ENCODE measurements at regions of chr1 and their contacts with region 1.

Region 1: GRCh38 chr1:9004700-9005394 is 21.4 kb downstream of the SLC2A7 start:
- DNase-seq: peak; percentile 67 to 90 (median 82)
- ATAC-seq: peak; percentile 96
- H3K4me3 ChIP-seq: peak overlapping the region; percentile 7 to 48
- H3K4me3 Mint-ChIP-seq: peak overlapping the region; percentile 75
- H3K27ac ChIP-seq: no peak overlapping the region
- H3K27ac Mint-ChIP-seq: peak overlapping the region; percentile 66
- H3K4me1 ChIP-seq: peaks cover 16% of the 10 kb centered on the region
- H3K4me1 Mint-ChIP-seq: peaks cover 12% of the 10 kb centered on the region
- H3K27me3 ChIP-seq: no peaks in the 10 kb centered on the region
- H3K27me3 Mint-ChIP-seq: no peaks in the 10 kb centered on the region
- CTCF ChIP-seq: peak; percentile 97

Region 2: GRCh38 chr1:8477166-8477982 is 527.5 kb before region 1 on chr1:
- CTCF ChIA-PET with region 1: no interaction called
- POLR2A ChIA-PET with region 1: no interaction called
- intact Hi-C with region 1: no loop called
- DNase-seq: no peak
- ATAC-seq: no peak
- H3K4me3 ChIP-seq: no peak overlapping the region
- H3K4me3 Mint-ChIP-seq: no peak overlapping the region
- H3K27ac ChIP-seq: no peak overlapping the region
- H3K27ac Mint-ChIP-seq: no peak overlapping the region
- H3K4me1 ChIP-seq: peaks cover 11% of the 10 kb centered on the region
- H3K4me1 Mint-ChIP-seq: peaks cover 27% of the 10 kb centered on the region
- H3K27me3 ChIP-seq: no peaks in the 10 kb centered on the region
- H3K27me3 Mint-ChIP-seq: no peaks in the 10 kb centered on the region
- CTCF ChIP-seq: no peak

Region 3: GRCh38 chr1:8560611-8561544 is 444.0 kb before region 1 on chr1:
- CTCF ChIA-PET with region 1: interaction called, 7 read pairs
- POLR2A ChIA-PET with region 1: no interaction called
- intact Hi-C with region 1: loop called in 1 of 2 experiments (anchors 10 kb)
- DNase-seq: peak in 5 of 9 experiments; percentile 28 to 70 (median 31)
- ATAC-seq: peak; percentile 94
- H3K4me3 ChIP-seq: no peak overlapping the region
- H3K4me3 Mint-ChIP-seq: no peak overlapping the region
- H3K27ac ChIP-seq: no peak overlapping the region
- H3K27ac Mint-ChIP-seq: no peak overlapping the region
- H3K4me1 ChIP-seq: no peaks in the 10 kb centered on the region
- H3K4me1 Mint-ChIP-seq: peaks cover 5% of the 10 kb centered on the region
- H3K27me3 ChIP-seq: no peaks in the 10 kb centered on the region
- H3K27me3 Mint-ChIP-seq: no peaks in the 10 kb centered on the region
- CTCF ChIP-seq: peak; percentile 99

Region 4: GRCh38 chr1:8858888-8859706 is 145.8 kb before region 1 on chr1:
- CTCF ChIA-PET with region 1: interaction called, 194 read pairs
- POLR2A ChIA-PET with region 1: interaction called, 5 read pairs
- intact Hi-C with region 1: loop called (anchors 1 kb)
- DNase-seq: peak in 7 of 9 experiments; percentile 37 to 76 (median 59)
- ATAC-seq: peak; percentile 79
- H3K4me3 ChIP-seq: no peak overlapping the region
- H3K4me3 Mint-ChIP-seq: no peak overlapping the region
- H3K27ac ChIP-seq: peak overlapping the region in 1 of 2 experiments; percentile 31
- H3K27ac Mint-ChIP-seq: peak overlapping the region; percentile 77
- H3K4me1 ChIP-seq: no peaks in the 10 kb centered on the region
- H3K4me1 Mint-ChIP-seq: peaks cover 15% of the 10 kb centered on the region
- H3K27me3 ChIP-seq: no peaks in the 10 kb centered on the region
- H3K27me3 Mint-ChIP-seq: no peaks in the 10 kb centered on the region
- CTCF ChIP-seq: peak; percentile 65

Region 5: DNA sequence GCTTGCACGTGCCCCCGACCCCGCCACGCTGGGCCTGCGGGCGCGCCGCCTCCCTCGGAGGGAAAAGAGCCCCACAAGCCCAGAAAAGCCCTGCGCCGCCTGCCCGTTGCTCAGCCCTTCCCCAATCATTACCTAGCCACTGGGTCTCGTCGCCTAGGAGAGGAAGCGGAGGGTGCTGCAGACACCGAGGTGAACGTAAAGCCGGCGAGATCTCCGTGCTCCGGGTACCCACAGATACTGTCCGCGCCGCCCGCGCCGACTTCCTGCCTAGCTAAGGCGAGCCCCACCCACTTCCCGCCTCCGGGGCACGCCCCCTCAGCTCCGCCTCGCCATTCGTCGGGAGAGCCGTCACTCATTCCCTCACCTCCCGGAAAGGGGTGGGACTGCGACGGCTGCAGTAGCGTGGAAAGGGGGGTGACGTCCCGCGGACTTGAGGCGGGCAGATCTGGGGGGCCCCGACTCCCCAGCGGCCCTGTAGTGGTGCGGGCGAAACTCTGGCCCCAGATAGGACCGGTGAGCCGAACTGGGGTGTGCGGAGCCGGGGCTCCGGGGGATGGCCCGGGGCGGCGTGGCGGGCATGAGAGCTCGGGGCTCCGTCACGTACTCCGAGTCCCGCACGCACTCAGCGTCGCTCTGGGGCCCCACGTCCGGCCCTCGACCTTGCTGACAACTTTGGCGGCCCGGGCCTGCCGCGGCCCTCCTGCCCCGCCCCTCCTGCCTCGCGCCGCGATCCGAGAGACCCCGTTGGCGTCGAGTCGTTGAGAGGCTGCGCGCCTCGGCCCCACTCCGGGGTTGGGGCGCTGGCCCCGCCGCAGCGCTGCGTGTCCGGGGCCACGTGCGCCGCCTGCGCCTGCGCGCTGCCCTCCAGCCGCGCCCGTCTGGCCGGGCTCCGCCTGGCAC is 126.1 kb before region 1 on chr1 and contains the start of gene ENO1:
- CTCF ChIA-PET with region 1: interaction called, 36 read pairs
- POLR2A ChIA-PET with region 1: interaction called, 7 read pairs
- intact Hi-C with region 1: no loop called
- DNase-seq: peak; percentile 96 to 100 (median 99)
- ATAC-seq: peak; percentile 80
- H3K4me3 ChIP-seq: peak within 1 kb of the TSS; percentile 90 to 94
- H3K4me3 Mint-ChIP-seq: peak within 1 kb of the TSS; percentile 92
- H3K27ac ChIP-seq: peak within 1 kb of the TSS; percentile 80 to 99
- H3K27ac Mint-ChIP-seq: peak within 1 kb of the TSS; percentile 98
- H3K4me1 ChIP-seq: peaks cover 43% of the 10 kb centered on the region
- H3K4me1 Mint-ChIP-seq: peaks cover 47% of the 10 kb centered on the region
- H3K27me3 ChIP-seq: no peaks in the 10 kb centered on the region
- H3K27me3 Mint-ChIP-seq: no peaks in the 10 kb centered on the region
- CTCF ChIP-seq: no peak
- total RNA-seq, gene ENO1: 130 to 136 TPM

Region 6: DNA sequence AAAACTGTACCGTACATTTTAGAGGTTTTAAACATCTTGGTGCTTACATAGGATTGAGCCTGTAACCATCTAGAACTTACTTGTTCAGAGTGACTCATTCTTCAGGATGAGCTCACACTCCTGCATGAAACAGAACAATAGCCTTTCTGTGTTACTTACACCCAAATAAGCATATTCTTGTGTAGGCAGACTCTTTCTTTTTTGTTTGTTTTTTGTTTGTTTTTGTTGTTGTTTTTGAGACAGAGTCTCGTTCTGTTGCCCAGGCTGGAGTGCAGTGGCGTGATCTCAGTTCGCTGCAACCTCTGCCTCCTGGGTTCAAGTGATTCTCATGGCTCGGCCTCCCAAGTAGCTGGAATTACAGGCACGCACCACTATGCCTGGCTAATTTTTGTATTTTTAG is 62.9 kb before region 1 on chr1:
- CTCF ChIA-PET with region 1: interaction called, 11 read pairs
- POLR2A ChIA-PET with region 1: no interaction called
- intact Hi-C with region 1: no loop called
- DNase-seq: no peak
- ATAC-seq: no peak
- H3K4me3 ChIP-seq: no peak overlapping the region
- H3K4me3 Mint-ChIP-seq: no peak overlapping the region
- H3K27ac ChIP-seq: no peak overlapping the region
- H3K27ac Mint-ChIP-seq: peak overlapping the region; percentile 69
- H3K4me1 ChIP-seq: peaks cover 98% of the 10 kb centered on the region
- H3K4me1 Mint-ChIP-seq: peaks cover 85% of the 10 kb centered on the region
- H3K27me3 ChIP-seq: no peaks in the 10 kb centered on the region
- H3K27me3 Mint-ChIP-seq: no peaks in the 10 kb centered on the region
- CTCF ChIP-seq: no peak

Region 7: DNA sequence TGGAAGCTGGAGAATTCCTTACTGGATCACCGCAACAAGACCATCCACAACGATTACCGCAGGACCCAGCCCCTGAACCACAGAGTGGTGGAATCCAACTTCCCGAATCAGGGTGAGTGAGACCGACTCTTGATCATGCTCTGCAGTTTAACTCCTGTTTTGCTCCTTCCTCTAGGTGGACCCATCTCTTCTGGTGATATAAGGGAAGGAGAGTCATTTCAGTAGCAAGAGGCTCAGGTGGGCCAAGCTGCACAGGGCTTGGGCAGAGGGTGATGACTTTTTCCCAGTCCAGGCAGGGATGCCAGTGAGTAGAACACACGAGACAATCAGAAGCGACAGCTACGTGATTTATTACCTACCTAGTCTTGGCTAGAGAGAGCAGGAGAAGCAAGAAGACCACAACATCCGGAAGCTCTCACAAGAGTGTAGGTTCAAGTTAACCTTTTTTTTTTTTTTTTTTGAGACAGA is 33.9 kb before region 1 on chr1:
- CTCF ChIA-PET with region 1: interaction called, 15 read pairs
- POLR2A ChIA-PET with region 1: interaction called, 5 read pairs
- intact Hi-C with region 1: loop called in 1 of 2 experiments (anchors 2 kb)
- DNase-seq: peak in 7 of 9 experiments; percentile 17 to 82 (median 62)
- ATAC-seq: peak; percentile 79
- H3K4me3 ChIP-seq: peak overlapping the region; percentile 62 to 77
- H3K4me3 Mint-ChIP-seq: peak overlapping the region; percentile 100
- H3K27ac ChIP-seq: peak overlapping the region; percentile 45 to 81
- H3K27ac Mint-ChIP-seq: peak overlapping the region; percentile 100
- H3K4me1 ChIP-seq: peaks cover 22% of the 10 kb centered on the region
- H3K4me1 Mint-ChIP-seq: peaks cover 41% of the 10 kb centered on the region
- H3K27me3 ChIP-seq: peaks cover 0 to 3% of the 10 kb centered on the region in 2 experiments
- H3K27me3 Mint-ChIP-seq: no peaks in the 10 kb centered on the region
- CTCF ChIP-seq: no peak

Region 8: GRCh38 chr1:8987881-8988617 is 16.8 kb before region 1 on chr1:
- CTCF ChIA-PET with region 1: interaction called, 113 read pairs
- POLR2A ChIA-PET with region 1: interaction called, 4 read pairs
- intact Hi-C with region 1: loop called in 1 of 2 experiments (anchors 1 kb)
- DNase-seq: peak in 8 of 9 experiments; percentile 47 to 84 (median 70)
- ATAC-seq: peak; percentile 67
- H3K4me3 ChIP-seq: peak overlapping the region in 1 of 2 experiments; percentile 24
- H3K4me3 Mint-ChIP-seq: peak overlapping the region; percentile 67
- H3K27ac ChIP-seq: no peak overlapping the region
- H3K27ac Mint-ChIP-seq: peak overlapping the region; percentile 92
- H3K4me1 ChIP-seq: peaks cover 37% of the 10 kb centered on the region
- H3K4me1 Mint-ChIP-seq: peaks cover 30% of the 10 kb centered on the region
- H3K27me3 ChIP-seq: no peaks in the 10 kb centered on the region
- H3K27me3 Mint-ChIP-seq: no peaks in the 10 kb centered on the region
- CTCF ChIP-seq: peak; percentile 99